ENCODE measurements at regions of chr21 and their contacts with region 1.

Region 1: DNA sequence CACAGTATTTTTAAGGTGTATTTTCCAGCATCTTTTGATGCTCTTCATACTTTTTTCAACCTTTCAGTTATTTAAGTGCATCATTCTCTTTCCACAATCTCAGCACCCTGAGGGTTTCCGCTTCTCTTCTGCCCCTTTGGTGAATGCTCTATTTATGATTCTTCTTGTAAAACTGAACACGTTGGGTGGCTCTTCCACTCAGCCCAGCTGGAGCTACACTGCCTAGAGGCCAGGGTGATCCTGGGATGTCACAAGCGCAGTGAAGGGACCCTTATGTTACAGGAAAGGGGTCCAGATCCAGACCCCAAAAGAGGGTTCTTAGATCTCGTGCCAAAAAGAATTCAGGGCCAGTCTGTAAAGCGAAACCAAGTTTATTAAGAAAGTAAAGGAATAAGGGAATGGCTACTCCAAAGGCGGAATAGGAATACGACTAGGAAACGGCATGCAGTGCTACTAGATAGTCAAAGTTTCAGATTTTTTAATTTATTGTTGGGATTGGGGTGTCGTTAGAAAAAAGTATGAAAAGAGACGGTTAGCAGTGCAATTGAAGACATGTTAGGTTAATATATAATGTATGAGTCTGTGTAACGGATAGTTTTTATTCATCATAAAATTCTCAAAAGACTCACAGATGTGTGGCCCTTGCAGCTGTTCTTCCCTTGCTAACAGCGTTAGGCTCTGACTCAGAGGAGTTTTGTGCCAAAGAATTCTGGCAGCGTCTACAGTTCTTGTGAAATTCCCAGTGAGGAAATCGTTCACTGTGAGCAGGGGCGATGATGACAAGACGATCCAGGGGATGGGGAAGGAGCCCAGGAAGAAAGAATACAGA is 14.4 kb upstream of the ERVH48-1 start:
- DNase-seq: no peak
- ATAC-seq: no peak
- H3K4me3 Mint-ChIP-seq: no peak overlapping the region
- H3K27ac Mint-ChIP-seq: no peak overlapping the region
- H3K4me1 Mint-ChIP-seq: no peaks in the 10 kb centered on the region
- H3K27me3 Mint-ChIP-seq: no peaks in the 10 kb centered on the region

Region 2: GRCh38 chr21:42079939-42080787 is 859.6 kb before region 1 on chr21:
- CTCF ChIA-PET with region 1: no interaction called
- POLR2A ChIA-PET with region 1: no interaction called
- intact Hi-C with region 1: loop called in 1 of 2 experiments (anchors 5 kb)
- DNase-seq: no peak
- ATAC-seq: no peak
- H3K4me3 Mint-ChIP-seq: no peak overlapping the region
- H3K27ac Mint-ChIP-seq: no peak overlapping the region
- H3K4me1 Mint-ChIP-seq: no peaks in the 10 kb centered on the region
- H3K27me3 Mint-ChIP-seq: no peaks in the 10 kb centered on the region

Measured in activated CD4-positive, alpha-beta T cell treated with anti-CD3 and anti-CD28 coated beads for 36 hours (primary cell).